Heart left ventricle (tissue), 16 donors: ENCODE measurements at regions of chr5 and their contacts with region 1.

Region 1: DNA sequence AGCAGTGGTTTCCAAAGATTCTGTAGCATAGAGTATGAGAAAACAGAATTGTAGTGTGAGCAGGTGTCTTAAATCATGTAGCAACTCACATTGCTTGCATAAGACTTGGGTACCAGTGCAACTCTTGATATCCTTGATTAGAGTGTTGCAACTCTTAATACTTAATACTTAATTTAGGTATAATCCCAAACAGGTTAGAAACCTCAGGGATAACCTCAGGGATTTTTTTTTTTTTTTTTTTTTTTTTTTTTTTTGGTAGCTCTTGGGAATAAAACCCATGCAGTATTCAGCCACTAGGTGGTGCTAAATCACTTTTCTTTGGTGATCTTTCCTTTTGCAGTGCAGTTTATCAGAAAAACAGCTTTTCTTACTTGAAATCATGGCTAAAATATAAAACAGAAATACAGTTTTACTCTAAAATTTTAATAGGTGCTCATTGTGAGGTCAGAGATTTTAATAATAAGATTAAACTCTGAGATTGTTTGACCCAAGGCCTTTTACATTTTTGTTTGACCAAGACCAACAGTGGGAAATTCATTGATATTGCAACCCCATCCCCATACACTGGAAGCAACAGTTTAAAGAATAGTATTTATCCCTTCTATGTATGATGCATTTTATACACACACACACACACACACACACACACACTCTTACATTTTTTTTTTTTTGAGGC is 55.3 kb downstream of the ERAP1 start:
- DNase-seq: peak in 1 of 5 donors; percentile 38
- ATAC-seq: no peak
- H3K4me3 ChIP-seq: no peak overlapping the region
- H3K27ac ChIP-seq: peak overlapping the region in 10 of 12 donors; percentile 4 to 62 (median 36)
- H3K4me1 ChIP-seq: peaks cover 0 to 28% (median 11%) of the 10 kb centered on the region in 12 donors
- H3K27me3 ChIP-seq: no peaks in the 10 kb centered on the region
- CTCF ChIP-seq: peak; percentile 65 to 84 (median 74)
- POLR2A ChIP-seq: no peak

Region 2: DNA sequence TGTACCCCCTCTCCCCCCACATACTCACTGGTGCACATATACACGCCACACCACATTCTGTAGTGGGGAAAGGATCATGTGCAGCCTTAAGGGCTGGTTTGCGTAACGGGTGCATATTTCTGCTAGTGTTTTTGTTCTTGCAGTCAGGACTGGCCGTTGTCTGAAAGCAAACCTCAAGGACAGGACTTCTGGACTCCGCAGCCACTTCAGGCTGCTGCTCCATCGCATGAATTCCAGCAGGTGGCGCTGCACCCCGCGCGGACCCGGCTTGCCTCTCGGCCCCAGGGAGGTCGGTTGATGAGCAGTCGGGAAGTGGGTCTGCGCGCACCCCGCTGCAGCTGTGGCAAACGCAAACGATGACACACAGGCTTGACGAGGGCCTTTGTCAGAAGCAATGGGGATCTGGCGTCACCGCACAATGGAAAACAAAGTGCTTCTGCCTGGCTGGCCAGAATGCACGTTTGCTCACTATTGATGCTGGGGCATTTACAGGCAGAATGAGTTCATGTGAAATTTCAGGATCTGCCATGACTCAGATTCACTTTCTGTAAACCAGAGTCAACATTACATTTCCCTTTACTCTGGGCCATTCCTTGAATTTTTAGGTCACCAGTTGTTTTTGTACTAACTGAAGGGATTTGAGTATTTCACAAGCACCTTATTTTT is 893.7 kb before region 1 on chr5:
- intact Hi-C with region 1: no loop called
- DNase-seq: peak; percentile 85 to 96 (median 91)
- ATAC-seq: peak; percentile 62 to 80 (median 73)
- H3K4me3 ChIP-seq: peak overlapping the region in 9 of 12 donors; percentile 18 to 46 (median 30)
- H3K27ac ChIP-seq: peak overlapping the region; percentile 82 to 97 (median 90)
- H3K4me1 ChIP-seq: peaks cover 0 to 72% (median 44%) of the 10 kb centered on the region in 12 donors
- H3K27me3 ChIP-seq: no peaks in the 10 kb centered on the region
- CTCF ChIP-seq: peak; percentile 97 to 99 (median 98)
- POLR2A ChIP-seq: peak in 1 of 2 donors; percentile 37

Region 3: DNA sequence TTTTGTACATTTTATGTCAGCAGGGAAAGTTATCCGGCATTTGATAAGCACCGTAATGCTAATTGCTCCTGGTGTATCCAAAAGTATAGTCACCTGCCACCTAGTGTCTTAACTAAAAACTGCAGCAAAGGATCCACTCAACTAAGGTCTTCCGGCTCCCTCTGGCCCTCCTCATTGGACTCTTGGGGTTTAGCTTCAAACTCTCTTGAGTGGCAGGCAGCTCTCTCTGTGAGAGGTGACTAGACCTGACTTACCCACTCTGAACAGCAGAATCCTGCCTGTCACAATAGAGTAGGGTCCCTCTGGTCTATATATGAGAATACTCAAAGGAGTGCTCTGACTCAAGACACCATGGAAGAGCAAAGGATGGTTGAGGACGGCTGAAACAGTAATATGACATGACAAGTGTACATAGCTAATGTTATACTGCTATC is 150.7 kb before region 1 on chr5:
- intact Hi-C with region 1: no loop called
- DNase-seq: peak in 2 of 5 donors; percentile 37 to 48
- ATAC-seq: peak; percentile 68 to 92 (median 85)
- H3K4me3 ChIP-seq: peak overlapping the region in 3 of 12 donors; percentile 15 to 27 (median 27)
- H3K27ac ChIP-seq: no peak overlapping the region
- H3K4me1 ChIP-seq: peaks cover 0 to 9% (median 0%) of the 10 kb centered on the region in 12 donors
- H3K27me3 ChIP-seq: no peaks in the 10 kb centered on the region
- CTCF ChIP-seq: peak; percentile 76 to 90 (median 82)
- POLR2A ChIP-seq: no peak

Region 4: DNA sequence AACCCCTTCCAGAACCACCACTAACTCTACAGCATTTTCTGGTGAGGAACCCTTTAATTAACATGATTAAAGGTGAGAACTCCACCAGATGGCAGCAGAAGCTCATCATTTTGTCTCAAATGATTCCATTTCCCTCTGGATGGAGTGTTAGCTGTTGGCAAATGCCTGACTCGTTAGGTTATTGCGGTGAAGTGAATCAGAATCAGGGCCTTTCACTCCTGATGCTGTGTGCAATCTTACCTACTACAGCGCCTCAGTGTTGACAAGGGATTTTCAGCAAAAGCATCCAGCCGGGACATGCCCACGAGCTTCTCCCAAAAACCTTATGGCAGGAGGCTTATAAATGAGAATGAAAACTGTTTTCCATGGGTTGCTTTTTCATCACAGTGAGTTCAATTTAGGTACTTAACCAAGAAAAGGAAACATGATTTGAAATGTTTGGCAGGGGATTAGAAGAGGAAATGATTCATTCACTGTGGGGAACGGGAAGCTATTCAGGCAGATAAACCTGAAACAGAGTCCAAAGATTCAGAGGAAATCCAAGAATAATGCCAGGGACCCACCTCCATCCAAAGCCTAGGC is 138.3 kb before region 1 on chr5:
- intact Hi-C with region 1: loop called in 6 of 10 experiments (anchors 5 to 10 kb)
- DNase-seq: peak in 3 of 5 donors; percentile 46 to 60 (median 58)
- ATAC-seq: peak; percentile 63 to 90 (median 81)
- H3K4me3 ChIP-seq: peak overlapping the region in 4 of 12 donors; percentile 4 to 29 (median 23)
- H3K27ac ChIP-seq: peak overlapping the region in 11 of 12 donors; percentile 1 to 72 (median 60)
- H3K4me1 ChIP-seq: peaks cover 0 to 22% (median 16%) of the 10 kb centered on the region in 12 donors
- H3K27me3 ChIP-seq: no peaks in the 10 kb centered on the region
- CTCF ChIP-seq: peak; percentile 31 to 73 (median 60)
- POLR2A ChIP-seq: no peak

Region 5: DNA sequence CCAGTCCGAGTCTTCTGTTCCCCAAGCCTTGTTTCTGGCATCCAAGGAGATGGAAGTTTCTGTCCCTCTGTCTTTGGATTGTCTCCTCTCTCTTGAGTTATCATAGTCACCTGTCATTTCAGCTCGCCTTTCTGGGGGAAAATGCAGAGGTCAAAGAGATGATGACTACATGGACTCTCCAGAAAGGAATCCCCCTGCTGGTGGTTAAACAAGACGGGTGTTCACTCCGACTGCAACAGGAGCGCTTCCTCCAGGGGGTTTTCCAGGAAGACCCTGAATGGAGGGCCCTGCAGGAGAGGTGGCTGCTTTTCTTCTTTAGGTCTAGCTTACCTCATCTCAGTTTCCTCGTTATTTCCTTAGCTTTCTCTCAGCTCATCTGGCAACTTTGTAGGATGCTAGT is 148.9 kb after region 1 on chr5:
- intact Hi-C with region 1: loop called in 1 of 10 experiments (anchors 10 kb)
- DNase-seq: no peak
- ATAC-seq: no peak
- H3K4me3 ChIP-seq: no peak overlapping the region
- H3K27ac ChIP-seq: no peak overlapping the region
- H3K4me1 ChIP-seq: peaks cover 0 to 19% (median 0%) of the 10 kb centered on the region in 12 donors
- H3K27me3 ChIP-seq: no peaks in the 10 kb centered on the region
- CTCF ChIP-seq: peak in 1 of 12 donors; percentile 7
- POLR2A ChIP-seq: no peak

Region 6: DNA sequence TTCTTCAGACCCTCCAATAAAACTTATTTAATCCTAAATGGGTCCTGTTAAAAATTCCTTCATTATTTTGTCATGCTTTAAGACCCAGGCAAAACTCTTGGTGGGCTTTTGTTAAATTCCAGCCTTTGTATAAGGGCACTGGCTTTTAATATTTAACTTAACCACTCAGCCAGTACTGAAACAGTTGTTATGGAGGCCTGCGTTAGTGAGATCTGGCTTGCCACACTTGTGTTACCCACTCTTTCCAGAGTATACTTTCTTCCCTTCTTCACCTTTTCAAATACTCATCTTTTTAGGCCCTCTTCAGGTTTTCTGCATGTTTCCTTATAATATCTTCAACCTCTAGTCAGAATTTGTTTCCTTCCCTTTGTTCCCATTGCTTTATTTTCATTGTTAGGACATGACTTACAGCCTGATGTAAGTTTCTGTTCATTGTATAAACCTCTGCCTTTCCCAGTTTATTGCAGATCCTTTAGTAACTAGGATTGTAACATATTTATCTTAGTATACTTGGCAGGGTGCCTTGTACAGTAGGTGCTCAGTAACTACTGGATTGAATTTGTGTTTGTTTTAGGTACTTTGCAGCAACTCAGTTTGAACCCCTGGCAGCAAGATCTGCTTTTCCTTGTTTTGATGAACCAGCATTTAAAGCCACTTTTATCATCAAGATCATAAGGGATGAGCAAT is 232.2 kb after region 1 on chr5:
- intact Hi-C with region 1: loop called in 1 of 10 experiments (anchors 10 kb)
- DNase-seq: no peak
- ATAC-seq: no peak
- H3K4me3 ChIP-seq: no peak overlapping the region
- H3K27ac ChIP-seq: no peak overlapping the region
- H3K4me1 ChIP-seq: peaks cover 0 to 13% (median 0%) of the 10 kb centered on the region in 12 donors
- H3K27me3 ChIP-seq: no peaks in the 10 kb centered on the region
- CTCF ChIP-seq: no peak
- POLR2A ChIP-seq: no peak

Region 7: GRCh38 chr5:97009212-97009898 is 256.9 kb after region 1 on chr5:
- intact Hi-C with region 1: loop called in 1 of 10 experiments (anchors 10 kb)
- DNase-seq: peak in 1 of 5 donors; percentile 13
- ATAC-seq: peak in 3 of 4 donors; percentile 57 to 60 (median 59)
- H3K4me3 ChIP-seq: no peak overlapping the region
- H3K27ac ChIP-seq: peak overlapping the region in 2 of 12 donors; percentile 25 to 63
- H3K4me1 ChIP-seq: peaks cover 0 to 19% (median 10%) of the 10 kb centered on the region in 12 donors
- H3K27me3 ChIP-seq: no peaks in the 10 kb centered on the region
- CTCF ChIP-seq: no peak
- POLR2A ChIP-seq: no peak

Region 8: GRCh38 chr5:97162045-97162444 is 409.6 kb after region 1 on chr5:
- intact Hi-C with region 1: loop called in 9 of 10 experiments (anchors 1 to 10 kb)
- DNase-seq: peak in 3 of 5 donors; percentile 33 to 59 (median 44)
- ATAC-seq: peak in 3 of 4 donors; percentile 71 to 77 (median 76)
- H3K4me3 ChIP-seq: no peak overlapping the region
- H3K27ac ChIP-seq: no peak overlapping the region
- H3K4me1 ChIP-seq: peaks cover 0 to 6% (median 0%) of the 10 kb centered on the region in 12 donors
- H3K27me3 ChIP-seq: no peaks in the 10 kb centered on the region
- CTCF ChIP-seq: peak; percentile 81 to 95 (median 89)
- POLR2A ChIP-seq: no peak